ENCODE measurements at regions of chr6 and their contacts with region 1.

Region 1: GRCh38 chr6:158081657-158081935 is 86.5 kb downstream of the SERAC1 start:
- DNase-seq: no peak
- H3K4me3 ChIP-seq: no peak overlapping the region
- H3K27ac ChIP-seq: no peak overlapping the region
- H3K4me1 ChIP-seq: no peaks in the 10 kb centered on the region
- H3K27me3 ChIP-seq: no peaks in the 10 kb centered on the region
- CTCF ChIP-seq: no peak

Region 2: GRCh38 chr6:158040051-158040803 is 41.4 kb before region 1 on chr6:
- CTCF ChIA-PET with region 1: no interaction called
- dilution Hi-C with region 1: no loop called
- in situ Hi-C with region 1: no loop called
- intact Hi-C with region 1: no loop called
- DNase-seq: peak; percentile 91
- H3K4me3 ChIP-seq: no peak overlapping the region
- H3K27ac ChIP-seq: no peak overlapping the region
- H3K4me1 ChIP-seq: peaks cover 48% of the 10 kb centered on the region
- H3K27me3 ChIP-seq: no peaks in the 10 kb centered on the region
- CTCF ChIP-seq: no peak

Region 3: DNA sequence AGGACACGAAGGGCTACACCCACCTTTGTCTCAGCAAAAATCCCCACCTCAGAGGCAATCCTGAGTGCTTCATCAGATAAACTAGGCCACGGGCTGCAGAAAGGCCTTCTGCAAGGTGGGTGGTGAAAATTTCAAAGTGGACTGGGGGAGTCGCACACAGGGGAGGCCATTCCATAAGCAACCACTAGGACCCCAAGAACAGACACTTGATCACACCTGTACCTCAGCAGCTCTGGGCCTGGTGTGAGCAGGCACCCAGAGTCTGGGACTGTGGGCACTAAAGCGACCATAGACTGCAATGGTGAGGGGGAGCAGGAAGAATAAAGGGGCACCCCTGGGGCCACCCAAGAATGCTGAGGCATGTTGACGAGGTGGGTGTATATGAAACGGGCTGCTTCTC is 33.9 kb after region 1 on chr6:
- CTCF ChIA-PET with region 1: no interaction called
- dilution Hi-C with region 1: loop called (anchors 5 kb)
- in situ Hi-C with region 1: no loop called
- intact Hi-C with region 1: no loop called
- DNase-seq: no peak
- H3K4me3 ChIP-seq: no peak overlapping the region
- H3K27ac ChIP-seq: no peak overlapping the region
- H3K4me1 ChIP-seq: no peaks in the 10 kb centered on the region
- H3K27me3 ChIP-seq: no peaks in the 10 kb centered on the region
- CTCF ChIP-seq: no peak

Region 4: GRCh38 chr6:158460602-158461169 is 379.1 kb after region 1 on chr6:
- CTCF ChIA-PET with region 1: no interaction called
- dilution Hi-C with region 1: no loop called
- in situ Hi-C with region 1: no loop called
- intact Hi-C with region 1: no loop called
- DNase-seq: peak; percentile 71
- H3K4me3 ChIP-seq: no peak overlapping the region
- H3K27ac ChIP-seq: no peak overlapping the region
- H3K4me1 ChIP-seq: no peaks in the 10 kb centered on the region
- H3K27me3 ChIP-seq: no peaks in the 10 kb centered on the region
- CTCF ChIP-seq: no peak

Measured in mammary epithelial cell (primary cell).